Calu3 (cell line): ENCODE measurements at regions of chr3 and their contacts with region 1.

Region 1: GRCh38 chr3:141561426-141562034 is 74.7 kb downstream of the RASA2 start:
- DNase-seq: peak; percentile 76
- H3K4me3 Mint-ChIP-seq: no peak overlapping the region
- H3K27ac Mint-ChIP-seq: no peak overlapping the region
- H3K4me1 Mint-ChIP-seq: no peaks in the 10 kb centered on the region
- H3K27me3 Mint-ChIP-seq: no peaks in the 10 kb centered on the region
- CTCF ChIP-seq: peak; percentile 91

Region 2: DNA sequence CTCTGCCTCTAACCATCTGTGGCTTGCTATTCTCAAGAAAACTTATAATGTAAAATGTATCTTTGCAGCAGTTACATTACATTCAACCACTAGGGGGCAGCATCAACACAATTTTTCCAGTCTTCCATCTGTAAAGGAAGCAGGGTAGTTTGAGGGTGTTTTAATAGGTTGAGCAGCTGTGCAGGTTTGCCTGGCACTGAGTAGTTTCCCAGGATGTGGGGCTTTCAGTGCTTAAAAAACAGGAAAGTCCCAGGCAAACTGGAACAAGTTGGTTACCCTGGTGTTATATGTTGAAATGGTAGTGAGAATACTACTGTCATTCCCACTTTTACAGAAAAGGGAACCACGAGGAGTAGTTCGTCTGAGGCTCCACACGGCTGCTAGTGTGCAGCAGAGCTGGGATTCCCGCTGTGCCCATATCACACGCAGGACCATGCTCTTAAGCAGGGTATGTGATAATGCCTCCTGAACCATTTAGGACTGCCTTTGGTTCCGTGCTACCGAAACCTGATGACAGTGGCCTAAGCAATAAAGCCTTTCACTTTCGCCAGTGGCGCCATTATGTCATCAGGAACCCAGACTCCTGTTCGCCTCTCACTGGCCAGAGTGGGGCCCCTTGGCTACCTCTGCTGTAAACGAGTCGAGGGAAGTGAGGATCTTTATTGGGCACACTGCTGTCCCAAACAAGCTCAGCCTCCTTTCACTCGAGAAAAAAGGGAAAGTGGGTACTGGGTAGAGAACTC is 257.9 kb before region 1 on chr3:
- CTCF ChIA-PET with region 1: no interaction called
- intact Hi-C with region 1: loop called (anchors 2 kb)
- DNase-seq: peak; percentile 89
- H3K4me3 Mint-ChIP-seq: no peak overlapping the region
- H3K27ac Mint-ChIP-seq: no peak overlapping the region
- H3K4me1 Mint-ChIP-seq: peaks cover 7% of the 10 kb centered on the region
- H3K27me3 Mint-ChIP-seq: peaks cover 19% of the 10 kb centered on the region
- CTCF ChIP-seq: peak; percentile 82

Region 3: DNA sequence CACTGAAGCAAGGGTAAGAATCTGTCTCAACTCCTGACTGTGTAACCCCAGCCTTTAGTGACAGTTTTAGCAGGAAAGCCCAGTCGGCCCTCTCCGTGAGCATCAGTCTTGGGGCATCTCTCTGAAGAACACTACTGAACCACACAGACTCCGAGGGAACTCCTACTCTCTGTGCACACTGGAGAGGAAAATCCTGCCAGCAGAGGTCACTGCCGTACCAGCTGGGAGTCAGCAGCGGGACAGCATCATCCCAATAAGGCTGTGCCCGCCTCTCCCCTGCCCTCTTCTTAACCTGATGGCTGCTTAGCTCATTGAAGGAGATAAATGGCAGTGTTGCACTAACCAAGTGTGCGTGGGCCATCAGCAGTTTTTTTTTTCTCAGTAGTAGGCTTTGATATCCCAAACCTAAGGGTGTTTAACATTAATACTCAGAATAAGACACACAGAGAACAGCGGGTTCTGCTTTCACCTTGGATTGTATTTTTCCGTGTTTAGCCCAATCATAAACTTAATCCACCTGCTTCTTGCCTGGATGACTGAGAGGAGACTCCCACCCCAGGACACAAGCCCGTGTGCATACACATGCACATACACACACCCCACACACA is 101.3 kb before region 1 on chr3:
- CTCF ChIA-PET with region 1: interaction called, 26 read pairs
- intact Hi-C with region 1: loop called (anchors 1 kb)
- DNase-seq: peak; percentile 96
- H3K4me3 Mint-ChIP-seq: no peak overlapping the region
- H3K27ac Mint-ChIP-seq: no peak overlapping the region
- H3K4me1 Mint-ChIP-seq: peaks cover 27% of the 10 kb centered on the region
- H3K27me3 Mint-ChIP-seq: no peaks in the 10 kb centered on the region
- CTCF ChIP-seq: peak; percentile 90

Region 4: DNA sequence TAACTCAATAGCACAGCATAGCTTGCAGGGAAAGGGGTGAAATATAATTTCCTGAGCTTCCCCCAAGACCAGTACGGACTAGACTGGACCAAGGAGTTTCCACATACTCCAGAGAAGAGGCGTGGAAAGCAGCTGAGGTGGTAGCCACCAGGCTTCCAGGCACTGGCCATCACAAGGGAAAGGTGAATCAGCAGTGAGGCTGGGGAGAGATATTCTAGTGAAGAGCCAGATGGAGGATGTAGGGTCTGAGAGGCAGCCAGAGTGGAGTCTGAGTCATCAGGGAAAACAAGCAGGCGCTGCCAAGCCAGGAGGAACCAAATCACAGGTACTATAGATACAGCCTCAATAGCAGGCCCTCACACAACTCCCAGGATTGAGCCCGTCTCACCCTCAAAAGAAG is 84.3 kb before region 1 on chr3:
- CTCF ChIA-PET with region 1: interaction called, 3 read pairs
- intact Hi-C with region 1: loop called (anchors 1 kb)
- DNase-seq: peak; percentile 78
- H3K4me3 Mint-ChIP-seq: no peak overlapping the region
- H3K27ac Mint-ChIP-seq: no peak overlapping the region
- H3K4me1 Mint-ChIP-seq: peaks cover 30% of the 10 kb centered on the region
- H3K27me3 Mint-ChIP-seq: no peaks in the 10 kb centered on the region
- CTCF ChIP-seq: no peak